Activated CD4-positive, alpha-beta T cell treated with anti-CD3 and anti-CD28 coated beads, Interleukin-2, amount 10 ng/mL, durations not matched to agents 24 days and 14 days (primary cell): ENCODE measurements at regions of chr2 and their contacts with region 1.

Region 1: GRCh38 chr2:157492189-157492773 is 48.4 kb upstream of the CYTIP start:
- DNase-seq: peak; percentile 91
- H3K4me3 Mint-ChIP-seq: no peak overlapping the region
- H3K27ac Mint-ChIP-seq: no peak overlapping the region
- H3K4me1 Mint-ChIP-seq: peaks cover 56% of the 10 kb centered on the region
- H3K27me3 Mint-ChIP-seq: no peaks in the 10 kb centered on the region

Region 2: GRCh38 chr2:157468931-157469708 is 23.2 kb before region 1 on chr2:
- intact Hi-C with region 1: loop called (anchors 1 kb)
- DNase-seq: peak; percentile 82
- H3K4me3 Mint-ChIP-seq: peak overlapping the region; percentile 78
- H3K27ac Mint-ChIP-seq: peak overlapping the region; percentile 97
- H3K4me1 Mint-ChIP-seq: peaks cover 82% of the 10 kb centered on the region
- H3K27me3 Mint-ChIP-seq: no peaks in the 10 kb centered on the region

Region 3: DNA sequence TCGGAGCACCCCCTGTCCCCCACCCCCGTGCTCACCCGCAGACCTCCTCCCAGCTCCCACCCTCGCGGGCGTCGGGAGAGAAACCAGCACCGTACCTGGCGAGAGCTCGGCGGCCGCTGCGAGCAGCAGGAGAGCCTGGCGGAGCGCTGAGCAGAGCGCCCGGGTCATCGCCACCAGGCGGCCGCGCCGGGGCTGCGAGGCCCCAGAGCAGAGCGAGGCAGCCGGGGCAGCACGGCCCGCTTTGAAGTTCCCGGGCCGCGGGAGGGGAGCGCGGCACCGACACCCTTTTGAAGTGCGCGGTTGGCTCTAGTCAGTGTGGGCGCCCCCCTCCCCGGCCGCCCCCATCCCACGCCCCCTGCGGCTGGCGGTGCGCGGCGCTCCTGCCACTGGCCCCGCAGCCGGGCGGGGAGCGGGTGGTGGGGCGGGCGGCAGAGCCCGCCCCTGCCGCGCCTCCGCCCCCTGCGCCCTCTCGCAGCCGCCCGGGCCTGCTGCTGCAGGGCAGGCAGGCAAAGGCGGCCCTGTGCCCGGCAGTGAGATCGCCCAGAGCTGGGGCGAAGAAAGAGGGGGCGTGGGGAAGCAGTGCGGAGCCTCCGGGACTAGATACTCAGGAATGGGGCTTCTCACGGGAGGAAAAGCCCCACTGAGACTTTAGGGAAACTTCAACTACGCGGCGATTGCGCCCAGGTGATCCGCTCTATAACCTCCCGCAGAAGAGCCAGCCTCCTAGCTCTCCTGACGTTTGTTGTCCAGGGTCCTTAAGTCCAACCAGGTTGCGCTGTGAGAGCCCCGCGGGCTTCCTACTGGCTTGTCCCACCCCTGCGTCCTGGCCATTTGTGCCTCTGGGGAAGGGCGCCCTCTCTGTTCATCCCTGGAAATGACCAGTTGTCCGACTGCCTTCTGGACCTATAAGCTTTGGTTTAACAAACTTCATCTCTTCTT is 136.5 kb after region 1 on chr2 and contains the start of gene ACVR1C:
- intact Hi-C with region 1: loop called (anchors 10 kb)
- DNase-seq: peak; percentile 90
- H3K4me3 Mint-ChIP-seq: peak within 1 kb of the TSS; percentile 91
- H3K27ac Mint-ChIP-seq: peak within 1 kb of the TSS; percentile 66
- H3K4me1 Mint-ChIP-seq: peaks cover 24% of the 10 kb centered on the region
- H3K27me3 Mint-ChIP-seq: peaks cover 27% of the 10 kb centered on the region
- total RNA-seq, gene ACVR1C: 0.98 and 1.0 TPM in 2 replicates